Heart left ventricle (tissue), 16 donors: ENCODE measurements at regions of chr9 and their contacts with region 1.

Region 1: DNA sequence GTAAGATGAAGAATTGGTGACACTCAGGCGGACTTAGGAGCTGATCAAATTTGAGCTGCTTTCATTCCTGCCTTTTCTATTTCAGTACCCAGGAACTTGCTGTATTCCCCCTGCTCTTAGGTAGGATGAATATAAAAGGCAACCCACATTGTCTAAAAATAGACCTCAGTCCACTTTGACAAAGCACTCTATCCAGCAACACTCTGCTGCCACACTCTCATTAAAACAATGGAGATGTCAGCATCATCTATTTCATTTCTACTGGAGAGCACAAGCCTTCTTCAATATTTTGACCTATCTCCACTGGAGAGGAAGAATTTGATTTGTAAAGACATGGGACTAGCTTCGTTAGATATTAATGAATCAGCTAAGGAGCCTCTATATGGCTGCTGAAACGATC is 468.4 kb downstream of the PTPRD start:
- DNase-seq: no peak
- ATAC-seq: peak; percentile 77 to 97 (median 94)
- H3K4me3 ChIP-seq: no peak overlapping the region
- H3K27ac ChIP-seq: peak overlapping the region in 9 of 12 donors; percentile 5 to 74 (median 61)
- H3K4me1 ChIP-seq: peaks cover 0 to 9% (median 0%) of the 10 kb centered on the region in 12 donors
- H3K27me3 ChIP-seq: no peaks in the 10 kb centered on the region
- CTCF ChIP-seq: no peak
- POLR2A ChIP-seq: no peak

Region 2: GRCh38 chr9:10079284-10079964 is 64.9 kb before region 1 on chr9:
- intact Hi-C with region 1: no loop called
- DNase-seq: no peak
- ATAC-seq: no peak
- H3K4me3 ChIP-seq: no peak overlapping the region
- H3K27ac ChIP-seq: no peak overlapping the region
- H3K4me1 ChIP-seq: no peaks in the 10 kb centered on the region
- H3K27me3 ChIP-seq: no peaks in the 10 kb centered on the region
- CTCF ChIP-seq: no peak
- POLR2A ChIP-seq: no peak

Region 3: GRCh38 chr9:10104774-10105173 is 39.6 kb before region 1 on chr9:
- intact Hi-C with region 1: loop called in 1 of 10 experiments (anchors 1 kb)
- DNase-seq: no peak
- ATAC-seq: no peak
- H3K4me3 ChIP-seq: no peak overlapping the region
- H3K27ac ChIP-seq: no peak overlapping the region
- H3K4me1 ChIP-seq: peaks cover 0 to 7% (median 0%) of the 10 kb centered on the region in 12 donors
- H3K27me3 ChIP-seq: no peaks in the 10 kb centered on the region
- CTCF ChIP-seq: no peak
- POLR2A ChIP-seq: no peak

Region 4: GRCh38 chr9:10204276-10204675 is 59.9 kb after region 1 on chr9:
- intact Hi-C with region 1: loop called in 1 of 10 experiments (anchors 10 kb)
- DNase-seq: no peak
- ATAC-seq: no peak
- H3K4me3 ChIP-seq: no peak overlapping the region
- H3K27ac ChIP-seq: no peak overlapping the region
- H3K4me1 ChIP-seq: no peaks in the 10 kb centered on the region
- H3K27me3 ChIP-seq: no peaks in the 10 kb centered on the region
- CTCF ChIP-seq: no peak
- POLR2A ChIP-seq: no peak